Activated T-helper 2 cell treated with anti-CD3 and anti-CD28 coated beads, Interferon-gamma antibody, Interleukin-2, Interleukin-4, amounts not matched to agents 10 μg/mL and 5 μg/mL and 100 μg/mL, durations not matched to agents 14 hours and 24 hours and 36 hours (primary cell): ENCODE measurements at regions of chr14 and their contacts with region 1.

Region 1: GRCh38 chr14:34857689-34858449 is 17.3 kb downstream of the BAZ1A start:
- DNase-seq: no peak
- H3K4me3 Mint-ChIP-seq: no peak overlapping the region
- H3K27ac Mint-ChIP-seq: peak overlapping the region; percentile 76
- H3K4me1 Mint-ChIP-seq: peaks cover 21% of the 10 kb centered on the region
- H3K27me3 Mint-ChIP-seq: no peaks in the 10 kb centered on the region

Region 2: DNA sequence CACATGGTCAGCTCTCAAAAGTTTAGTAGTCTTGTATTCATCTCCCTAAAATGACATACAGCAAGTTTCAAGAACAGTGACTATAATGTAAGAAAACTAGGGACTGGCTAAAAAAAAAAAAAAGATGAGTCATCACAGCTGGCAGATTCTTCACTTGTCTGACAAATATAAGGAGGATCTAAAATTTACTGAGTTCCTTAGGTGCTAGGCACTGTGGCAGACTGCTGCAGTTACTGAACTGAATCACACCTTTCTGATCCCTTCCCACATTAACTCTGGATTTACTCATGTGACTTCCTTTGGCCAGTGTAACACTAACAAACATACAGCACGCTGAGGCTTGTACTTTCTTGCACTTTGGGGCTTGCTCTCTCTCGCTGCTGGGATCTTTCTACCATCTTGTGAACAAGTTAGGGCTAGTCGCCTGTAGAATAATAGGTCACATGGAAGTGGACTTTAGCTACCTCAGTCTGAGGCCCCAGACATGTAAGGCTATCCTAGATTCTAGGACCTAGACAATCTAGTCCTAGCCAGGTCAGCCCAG is 14.8 kb before region 1 on chr14:
- intact Hi-C with region 1: loop called (anchors 2 kb)
- DNase-seq: no peak
- H3K4me3 Mint-ChIP-seq: no peak overlapping the region
- H3K27ac Mint-ChIP-seq: peak overlapping the region; percentile 61
- H3K4me1 Mint-ChIP-seq: peaks cover 12% of the 10 kb centered on the region
- H3K27me3 Mint-ChIP-seq: no peaks in the 10 kb centered on the region